Activated CD4-positive, alpha-beta T cell treated with anti-CD3 and anti-CD28 coated beads, Interleukin-2, amount 10 ng/mL, durations not matched to agents 24 days and 14 days (primary cell): ENCODE measurements at regions of chr15 and their contacts with region 1.

Region 1: DNA sequence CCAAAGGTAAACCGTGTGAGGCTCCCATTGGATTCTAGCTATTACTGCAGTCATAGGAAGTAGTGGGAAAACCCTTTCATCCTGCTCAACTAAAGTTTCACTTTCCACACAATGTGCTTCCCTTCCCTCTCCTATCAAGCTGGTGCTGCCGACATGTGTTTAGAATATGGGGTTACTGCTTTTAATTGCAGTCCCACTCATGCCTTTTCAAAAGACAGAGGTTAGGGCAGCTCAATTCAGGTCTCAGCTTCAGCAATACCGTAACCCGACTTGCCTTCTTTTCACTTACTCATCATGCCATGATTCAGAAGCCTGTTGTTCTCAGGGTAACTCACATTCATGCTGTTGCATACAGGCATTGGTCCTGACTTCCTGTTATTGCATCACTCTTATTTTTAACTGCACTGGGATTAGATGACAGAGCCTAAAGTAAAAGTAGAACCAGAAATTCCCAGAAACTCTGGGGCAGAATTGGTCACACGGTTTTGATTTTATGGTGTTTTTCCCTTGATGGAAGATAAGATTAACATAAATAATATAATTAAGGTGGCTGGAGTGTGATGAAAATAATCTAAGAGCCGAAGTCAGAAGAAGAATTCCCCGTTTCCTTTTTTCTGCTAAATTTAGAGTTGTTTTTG is 45.7 kb downstream of the C2CD4B start:
- DNase-seq: peak; percentile 72
- H3K4me3 Mint-ChIP-seq: peak overlapping the region; percentile 11
- H3K27ac Mint-ChIP-seq: peak overlapping the region; percentile 81
- H3K4me1 Mint-ChIP-seq: peaks cover 30% of the 10 kb centered on the region
- H3K27me3 Mint-ChIP-seq: no peaks in the 10 kb centered on the region

Region 2: DNA sequence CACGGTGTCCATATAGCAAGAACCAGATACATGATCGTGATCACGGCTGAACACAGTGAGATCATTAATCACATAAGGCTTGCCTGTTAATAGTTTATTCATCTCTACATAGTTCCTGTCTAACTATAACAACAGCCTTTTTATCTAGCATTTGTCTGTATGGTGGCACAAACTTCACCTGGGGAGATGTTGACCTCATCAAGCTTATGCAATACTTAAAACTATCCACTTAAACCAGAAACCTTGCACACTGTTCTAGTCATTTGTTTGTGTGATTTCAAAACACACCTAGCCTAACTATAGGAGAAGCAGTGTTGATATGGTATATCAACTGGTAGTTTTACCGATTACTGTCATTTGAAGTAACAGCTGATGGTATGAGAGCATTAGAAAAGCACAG is 183.9 kb before region 1 on chr15:
- intact Hi-C with region 1: no loop called
- DNase-seq: no peak
- H3K4me3 Mint-ChIP-seq: no peak overlapping the region
- H3K27ac Mint-ChIP-seq: no peak overlapping the region
- H3K4me1 Mint-ChIP-seq: peaks cover 2% of the 10 kb centered on the region
- H3K27me3 Mint-ChIP-seq: no peaks in the 10 kb centered on the region

Region 3: DNA sequence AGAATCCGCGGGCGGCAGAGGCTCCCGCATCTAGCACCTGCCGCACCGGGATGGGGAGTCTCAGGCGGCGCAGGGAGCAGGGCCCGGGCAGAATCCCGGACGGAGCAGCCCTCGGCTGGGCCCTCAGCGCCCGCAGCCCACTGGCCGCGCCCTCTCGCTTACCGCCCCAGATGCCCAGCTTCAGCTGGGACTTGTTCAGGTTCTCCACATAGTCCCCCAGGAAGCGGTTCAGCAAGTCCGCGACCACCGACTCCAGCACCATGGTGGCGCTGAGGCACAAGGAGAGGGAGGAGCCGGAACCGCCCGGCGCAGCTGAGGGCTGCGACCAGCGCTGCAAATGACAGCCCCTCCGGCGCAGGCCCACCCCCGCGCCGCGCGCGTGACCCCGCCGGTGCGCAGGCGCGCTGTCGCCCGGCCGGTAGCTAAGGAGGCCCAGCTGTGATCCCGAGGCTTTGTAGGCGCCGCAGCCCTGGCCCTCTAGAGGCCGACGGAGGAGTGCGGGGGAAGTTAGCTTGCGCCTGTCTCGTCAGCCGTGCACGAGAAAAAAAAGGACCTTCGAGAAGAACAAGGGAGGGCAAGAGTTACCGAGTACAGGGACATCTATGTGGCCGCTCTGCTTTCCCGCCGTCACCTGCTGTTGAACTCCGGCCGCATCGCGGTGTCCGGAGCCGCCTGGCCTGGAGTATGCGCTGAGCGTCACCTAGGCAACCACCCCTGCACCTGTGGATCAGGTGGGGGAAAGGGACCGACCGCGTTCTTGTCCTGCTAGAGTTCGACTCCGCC is 59.0 kb before region 1 on chr15 and contains the start of gene VPS13C:
- intact Hi-C with region 1: loop called (anchors 2 kb)
- DNase-seq: peak; percentile 98
- H3K4me3 Mint-ChIP-seq: peak within 1 kb of the TSS; percentile 93
- H3K27ac Mint-ChIP-seq: peak within 1 kb of the TSS; percentile 98
- H3K4me1 Mint-ChIP-seq: peaks cover 31% of the 10 kb centered on the region
- H3K27me3 Mint-ChIP-seq: peaks cover 24% of the 10 kb centered on the region
- total RNA-seq, gene VPS13C: 51.5 and 54.8 TPM in 2 replicates

Region 4: GRCh38 chr15:62138124-62138523 is 18.8 kb after region 1 on chr15:
- intact Hi-C with region 1: no loop called
- DNase-seq: no peak
- H3K4me3 Mint-ChIP-seq: no peak overlapping the region
- H3K27ac Mint-ChIP-seq: no peak overlapping the region
- H3K4me1 Mint-ChIP-seq: no peaks in the 10 kb centered on the region
- H3K27me3 Mint-ChIP-seq: peaks cover 3% of the 10 kb centered on the region